HEK293T (cell line): ENCODE measurements at regions of chr15 and their contacts with region 1.

Region 1: DNA sequence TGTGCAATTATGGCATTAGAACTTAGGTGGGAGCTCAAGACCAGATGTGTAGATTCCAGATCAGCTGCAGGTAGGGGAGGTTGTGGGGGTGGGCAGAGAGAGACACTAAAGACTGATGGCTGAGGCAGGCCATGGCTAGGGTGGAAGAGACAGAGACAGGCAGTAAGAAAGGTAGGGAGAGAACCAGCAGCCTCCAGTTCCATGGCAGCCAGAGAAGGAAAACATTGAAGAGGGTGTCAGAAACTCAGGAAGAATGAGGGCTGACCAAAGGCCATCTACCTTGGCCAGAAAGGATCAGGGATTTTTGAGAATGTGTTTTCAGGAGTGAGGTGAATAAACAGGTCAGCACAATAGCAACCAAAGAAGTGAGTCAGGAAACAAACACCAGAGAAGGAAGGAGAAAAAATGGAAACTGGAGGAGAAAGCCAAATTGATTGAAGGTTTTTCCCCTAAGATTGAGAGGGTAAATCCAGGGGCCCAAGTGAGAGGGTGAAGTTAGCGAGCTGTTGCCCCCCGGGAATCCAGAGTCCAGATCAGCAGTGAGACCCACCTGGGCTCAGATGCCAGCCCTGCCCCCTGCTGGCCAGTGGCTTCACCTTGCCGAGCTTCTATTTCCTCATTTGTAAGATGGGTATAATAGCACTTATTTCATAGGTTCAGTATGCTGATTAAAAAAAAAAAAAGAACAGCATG is 41.0 kb downstream of the ABHD2 start:
- DNase-seq: peak; percentile 63

Region 2: GRCh38 chr15:89139400-89140166 is 10.3 kb after region 1 on chr15:
- CTCF ChIA-PET with region 1: interaction called, 22 read pairs
- POLR2A ChIA-PET with region 1: interaction called, 3 read pairs
- DNase-seq: peak; percentile 61